ENCODE measurements at regions of chr7 and their contacts with region 1.

Region 1: DNA sequence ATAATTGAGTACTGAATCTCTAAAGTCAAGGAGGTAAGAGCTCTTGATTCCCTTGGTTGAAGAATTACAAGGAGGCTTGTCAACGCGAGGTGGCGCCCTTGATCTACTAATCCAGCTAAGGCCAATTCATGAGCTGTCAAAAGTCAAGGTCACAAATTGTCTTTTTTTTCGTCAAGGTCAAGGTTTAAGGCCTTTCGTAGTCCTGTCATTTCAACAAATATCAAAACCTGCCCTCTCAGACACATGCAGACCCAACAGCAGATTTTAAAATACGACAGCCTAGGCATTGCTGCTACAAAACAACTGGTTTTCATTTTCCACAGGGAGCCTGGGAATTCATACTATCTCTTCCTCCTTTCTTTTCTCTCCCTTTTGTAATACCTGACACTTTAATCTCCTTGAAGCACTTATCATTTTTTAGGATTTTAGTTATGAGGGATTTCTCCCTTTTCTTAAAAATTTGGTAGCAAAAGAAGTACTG is 3.6 kb downstream of the HOXA13 start:
- DNase-seq: peak; percentile 97
- H3K4me3 ChIP-seq: peak overlapping the region; percentile 68
- H3K27ac ChIP-seq: peak overlapping the region; percentile 0
- H3K4me1 ChIP-seq: no peaks in the 10 kb centered on the region
- H3K27me3 ChIP-seq: peaks cover 4% of the 10 kb centered on the region
- CTCF ChIP-seq: peak; percentile 66

Region 2: GRCh38 chr7:27251652-27252590 is 55.6 kb after region 1 on chr7:
- intact Hi-C with region 1: no loop called
- DNase-seq: no peak
- H3K4me3 ChIP-seq: no peak overlapping the region
- H3K27ac ChIP-seq: no peak overlapping the region
- H3K4me1 ChIP-seq: no peaks in the 10 kb centered on the region
- H3K27me3 ChIP-seq: peaks cover 54% of the 10 kb centered on the region
- CTCF ChIP-seq: no peak

Region 3: GRCh38 chr7:27423272-27423671 is 226.9 kb after region 1 on chr7:
- intact Hi-C with region 1: no loop called
- DNase-seq: peak; percentile 87
- H3K4me3 ChIP-seq: no peak overlapping the region
- H3K27ac ChIP-seq: peak overlapping the region; percentile 76
- H3K4me1 ChIP-seq: no peaks in the 10 kb centered on the region
- H3K27me3 ChIP-seq: no peaks in the 10 kb centered on the region
- CTCF ChIP-seq: no peak

Region 4: DNA sequence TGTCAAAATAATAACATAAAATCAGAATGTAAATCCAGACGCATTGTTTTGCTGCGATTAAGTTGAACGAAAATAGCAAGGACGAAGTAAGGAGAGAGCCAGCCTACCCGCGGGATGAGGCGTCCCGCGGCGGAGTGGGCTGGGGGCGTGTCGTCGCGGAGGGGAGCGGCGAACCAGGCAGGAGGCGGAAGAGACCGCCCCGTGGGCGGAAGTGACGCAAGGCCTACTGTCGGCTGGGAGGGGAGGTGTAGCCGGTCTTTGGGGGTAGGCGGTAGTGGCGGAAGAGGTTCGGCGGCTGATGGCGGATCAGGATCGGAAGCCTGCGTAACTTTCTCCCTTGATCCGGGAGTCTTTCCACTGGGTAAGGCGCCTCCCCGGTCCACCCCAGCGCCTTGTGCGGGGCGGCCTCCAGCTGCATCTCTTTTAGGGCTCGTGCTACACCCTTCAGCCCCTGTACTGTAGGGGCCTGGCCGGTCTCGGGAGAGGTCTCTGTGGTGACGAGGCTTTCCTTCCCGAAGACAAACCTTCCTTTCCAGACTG is 543.7 kb after region 1 on chr7 and contains the start of gene TAX1BP1:
- intact Hi-C with region 1: loop called (anchors 10 kb)
- DNase-seq: peak; percentile 97
- H3K4me3 ChIP-seq: peak within 1 kb of the TSS; percentile 94
- H3K27ac ChIP-seq: peak within 1 kb of the TSS; percentile 100
- H3K4me1 ChIP-seq: peaks cover 4% of the 10 kb centered on the region
- H3K27me3 ChIP-seq: no peaks in the 10 kb centered on the region
- CTCF ChIP-seq: no peak
- total RNA-seq, gene TAX1BP1: 96.6 to 156 TPM

Region 5: DNA sequence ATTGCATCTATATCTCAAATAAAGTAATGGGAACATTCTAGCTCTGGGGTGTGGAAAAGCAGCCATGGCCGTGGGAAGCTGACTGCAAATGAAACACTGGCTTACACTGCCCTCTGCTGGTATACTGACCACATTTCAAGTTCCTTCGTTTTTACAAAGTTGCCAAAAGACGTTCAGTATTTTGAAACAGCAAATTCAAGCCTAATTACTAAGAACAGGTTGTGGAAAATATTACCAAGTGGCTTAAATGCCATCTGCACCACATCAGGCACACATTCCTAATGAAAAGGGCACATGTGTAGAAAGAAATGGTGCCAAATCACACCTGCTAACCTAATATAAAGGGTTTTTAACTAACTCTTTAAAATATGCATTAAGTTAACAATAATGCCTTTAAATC is 900.4 kb after region 1 on chr7:
- intact Hi-C with region 1: loop called (anchors 10 kb)
- DNase-seq: peak; percentile 56
- H3K4me3 ChIP-seq: no peak overlapping the region
- H3K27ac ChIP-seq: no peak overlapping the region
- H3K4me1 ChIP-seq: no peaks in the 10 kb centered on the region
- H3K27me3 ChIP-seq: no peaks in the 10 kb centered on the region
- CTCF ChIP-seq: peak; percentile 80